AG04449 (cell line): ENCODE measurements at regions of chr10 and their contacts with region 1.

Region 1: DNA sequence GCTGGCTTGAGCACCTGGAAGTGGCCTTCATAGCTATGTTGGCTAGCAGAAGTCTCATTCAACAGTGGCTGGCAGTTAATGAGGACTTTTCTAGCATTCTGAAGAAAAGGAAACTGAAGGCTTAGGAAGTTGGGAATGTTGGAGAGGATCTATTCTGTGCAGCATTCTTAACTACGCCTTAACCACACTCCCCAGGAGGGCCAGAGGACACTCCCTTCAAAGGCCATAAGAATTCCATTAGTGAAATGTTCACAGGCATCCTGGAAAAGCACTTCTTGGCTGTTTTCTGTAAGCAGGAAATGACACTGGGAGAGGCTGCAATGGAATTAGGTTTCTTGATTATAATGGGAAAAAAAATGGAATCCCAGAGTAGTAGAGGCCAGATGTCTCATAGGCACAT is 188.9 kb downstream of the ARHGAP12 start:
- DNase-seq: peak; percentile 88
- H3K4me3 ChIP-seq: no peak overlapping the region
- CTCF ChIP-seq: no peak

Region 2: GRCh38 chr10:31728698-31729224 is 10.9 kb before region 1 on chr10:
- CTCF ChIA-PET with region 1: interaction called, 14 read pairs
- POLR2A ChIA-PET with region 1: interaction called, 3 read pairs
- DNase-seq: no peak
- H3K4me3 ChIP-seq: no peak overlapping the region
- CTCF ChIP-seq: no peak